ENCODE measurements at regions of chr1 and their contacts with region 1.

Region 1: GRCh38 chr1:148307583-148308190 is 155.6 kb upstream of the NBPF11 start:
- DNase-seq: no peak
- H3K4me3 ChIP-seq: no peak overlapping the region
- H3K27ac ChIP-seq: no peak overlapping the region
- H3K4me1 ChIP-seq: peaks cover 15% of the 10 kb centered on the region
- H3K27me3 ChIP-seq: no peaks in the 10 kb centered on the region
- CTCF ChIP-seq: no peak

Region 2: GRCh38 chr1:148272901-148273300 is 34.8 kb before region 1 on chr1:
- CTCF ChIA-PET with region 1: interaction called, 7 read pairs
- POLR2A ChIA-PET with region 1: no interaction called
- intact Hi-C with region 1: loop called (anchors 2 kb)
- DNase-seq: no peak
- H3K4me3 ChIP-seq: no peak overlapping the region
- H3K27ac ChIP-seq: no peak overlapping the region
- H3K4me1 ChIP-seq: peaks cover 12% of the 10 kb centered on the region
- H3K27me3 ChIP-seq: no peaks in the 10 kb centered on the region
- CTCF ChIP-seq: no peak

Measured in PC-9 (cell line).